GM10248 (cell line): ENCODE measurements at regions of chr10 and their contacts with region 1.

Region 1: DNA sequence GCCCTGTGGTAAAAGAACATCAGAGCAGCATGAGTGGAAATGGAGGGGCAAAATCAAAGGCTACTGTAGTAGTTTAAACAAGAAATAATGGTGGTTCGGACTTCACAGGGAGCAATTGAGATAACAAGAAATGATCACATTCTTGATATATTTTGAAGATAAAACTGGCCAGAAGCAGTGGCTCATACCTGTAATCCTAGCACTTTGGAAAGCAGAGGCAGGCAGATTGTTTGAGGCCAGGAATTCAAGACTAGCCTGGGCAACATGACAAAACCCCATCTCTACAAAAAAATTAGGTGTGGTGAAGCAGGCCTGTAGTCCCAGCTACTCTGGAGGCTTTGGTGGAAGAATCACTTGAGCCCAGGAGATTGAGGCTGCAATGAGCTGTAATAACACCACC is 22.9 kb downstream of the EEF1AKMT2 start:
- DNase-seq: no peak
- CTCF ChIP-seq: no peak

Region 2: DNA sequence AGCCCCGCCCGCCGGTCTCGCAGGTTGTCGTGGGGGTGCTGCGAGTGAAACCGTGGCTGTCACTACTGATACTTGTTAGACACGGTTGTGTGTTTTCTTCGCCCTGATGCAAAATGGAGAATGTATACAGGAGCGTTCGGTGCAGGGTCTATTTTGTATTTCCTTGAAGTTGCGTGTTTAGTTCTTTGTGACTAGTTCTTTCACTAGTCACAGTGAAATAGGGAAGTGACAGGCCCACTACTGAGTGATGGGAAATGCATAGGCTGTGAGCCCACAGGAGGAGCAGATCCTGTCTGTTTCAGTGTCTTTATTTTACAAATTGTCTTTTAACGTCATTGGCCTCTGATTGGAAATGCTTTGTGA is 33.5 kb after region 1 on chr10:
- CTCF ChIA-PET with region 1: no interaction called
- POLR2A ChIA-PET with region 1: interaction called, 11 read pairs
- DNase-seq: peak; percentile 41
- CTCF ChIP-seq: no peak